Cardiac septum (tissue), 1 donor: ENCODE measurements at regions of chr4 and their contacts with region 1.

Region 1: DNA sequence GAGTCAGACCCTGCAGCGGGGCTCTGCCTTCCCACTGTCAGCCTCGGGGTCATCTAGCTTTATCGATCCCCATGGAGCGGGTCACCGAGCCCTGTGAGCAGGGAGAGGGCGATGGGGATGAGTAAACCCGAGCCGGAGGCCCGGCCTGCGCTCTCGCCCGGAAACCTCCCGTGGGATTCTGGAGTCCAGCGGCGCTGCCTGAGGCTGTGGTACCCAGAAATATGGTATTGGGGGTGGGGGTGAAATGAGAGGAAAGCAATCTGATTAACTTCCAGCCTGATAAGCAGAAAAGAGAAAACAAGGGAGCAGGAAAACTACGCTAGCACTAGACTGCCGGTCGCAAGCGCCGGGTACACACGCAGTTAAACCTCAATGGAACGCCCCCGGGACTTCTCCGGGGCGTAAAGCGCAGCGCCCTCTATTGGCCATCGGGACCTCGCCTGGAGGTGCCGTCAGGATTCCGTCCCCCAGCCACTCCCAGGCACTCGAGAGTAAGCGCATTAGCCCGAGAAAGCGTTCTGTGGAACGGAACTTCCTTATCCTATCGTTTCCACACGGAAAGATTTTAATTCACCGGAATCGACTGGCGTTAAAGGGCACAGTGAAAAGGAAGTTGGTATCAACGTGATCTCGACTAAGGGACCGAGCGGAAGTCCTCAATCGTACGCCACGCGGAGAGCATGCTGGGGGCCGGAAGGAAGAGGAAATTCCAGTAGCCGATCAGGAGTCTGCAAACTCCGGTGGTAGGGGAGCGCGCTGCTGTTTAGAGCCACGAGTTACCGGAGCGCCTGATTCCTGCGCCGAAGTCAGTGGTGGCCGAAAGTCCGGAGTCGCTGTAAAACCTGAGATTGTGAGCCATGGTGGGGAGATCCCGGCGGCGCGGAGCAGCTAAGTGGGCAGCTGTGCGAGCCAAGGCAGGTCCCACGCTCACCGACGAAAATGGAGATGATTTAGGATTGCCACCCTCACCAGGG is at the start of gene UTP3:
- DNase-seq: peak; percentile 97
- total RNA-seq, gene UTP3: 22.8 TPM

Region 2: GRCh38 chr4:70642366-70642765 is 45.7 kb before region 1 on chr4:
- intact Hi-C with region 1: no loop called
- DNase-seq: no peak

Region 3: GRCh38 chr4:70704331-70705145 is 16.4 kb after region 1 on chr4:
- intact Hi-C with region 1: loop called (anchors 1 kb)
- DNase-seq: peak; percentile 90

Region 4: GRCh38 chr4:70754990-70755688 is 67.0 kb after region 1 on chr4:
- intact Hi-C with region 1: no loop called
- DNase-seq: no peak

Region 5: GRCh38 chr4:70993181-70994068 is 305.3 kb after region 1 on chr4 and contains the start of gene DCK:
- intact Hi-C with region 1: loop called (anchors 2 kb)
- DNase-seq: peak; percentile 95
- total RNA-seq, gene DCK: 7.1 TPM

Region 6: GRCh38 chr4:71130827-71131603 is 442.9 kb after region 1 on chr4:
- intact Hi-C with region 1: no loop called
- DNase-seq: no peak